PC-3 (cell line): ENCODE measurements at regions of chr20 and their contacts with region 1.

Region 1: DNA sequence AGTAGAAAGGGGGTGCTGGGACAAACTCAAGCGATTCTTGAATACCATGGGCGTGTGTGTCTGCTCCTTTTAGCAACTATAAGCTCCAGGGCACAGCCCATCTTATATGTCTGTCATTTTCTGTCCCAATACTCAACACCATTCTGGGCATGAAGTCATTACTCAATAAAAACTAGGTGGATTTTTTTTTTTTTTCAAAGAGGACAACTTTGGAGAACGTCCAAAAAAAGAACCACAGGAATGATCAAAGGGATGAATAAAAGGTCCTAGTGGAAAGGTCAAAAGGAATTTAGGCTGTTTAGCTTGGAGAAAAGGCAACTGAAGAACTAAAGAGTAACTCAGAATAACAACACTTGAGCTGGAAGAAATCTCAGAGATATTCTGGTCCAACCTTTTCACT is 24.4 kb downstream of the UQCC1 start:
- DNase-seq: peak; percentile 72
- ATAC-seq: peak; percentile 61
- H3K4me3 ChIP-seq: no peak overlapping the region
- H3K27ac ChIP-seq: no peak overlapping the region
- H3K4me1 ChIP-seq: peaks cover 14% of the 10 kb centered on the region
- H3K27me3 ChIP-seq: no peaks in the 10 kb centered on the region
- CTCF ChIP-seq: no peak

Region 2: DNA sequence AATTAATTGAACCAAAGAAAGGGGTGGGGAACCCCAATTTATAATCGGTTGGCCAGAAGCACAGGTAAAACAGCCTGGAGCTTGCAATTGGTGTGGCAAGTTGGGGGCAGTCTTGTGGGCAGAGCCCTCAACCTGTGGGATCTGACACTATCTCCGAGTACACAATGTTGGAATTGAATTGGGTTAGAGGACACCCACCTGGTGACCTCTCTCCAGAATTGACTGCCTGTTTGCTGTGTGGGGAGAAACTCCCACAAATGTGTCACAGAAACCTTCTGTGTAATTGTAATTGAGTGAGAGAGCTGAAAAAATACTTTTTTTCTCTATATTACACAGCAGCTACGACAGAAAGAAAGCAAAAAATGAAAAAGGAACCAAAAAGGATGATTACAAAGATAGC is 42.1 kb before region 1 on chr20:
- CTCF ChIA-PET with region 1: no interaction called
- POLR2A ChIA-PET with region 1: no interaction called
- intact Hi-C with region 1: loop called (anchors 5 kb)
- DNase-seq: no peak
- ATAC-seq: no peak
- H3K4me3 ChIP-seq: no peak overlapping the region
- H3K27ac ChIP-seq: no peak overlapping the region
- H3K4me1 ChIP-seq: peaks cover 11% of the 10 kb centered on the region
- H3K27me3 ChIP-seq: no peaks in the 10 kb centered on the region
- CTCF ChIP-seq: no peak

Region 3: DNA sequence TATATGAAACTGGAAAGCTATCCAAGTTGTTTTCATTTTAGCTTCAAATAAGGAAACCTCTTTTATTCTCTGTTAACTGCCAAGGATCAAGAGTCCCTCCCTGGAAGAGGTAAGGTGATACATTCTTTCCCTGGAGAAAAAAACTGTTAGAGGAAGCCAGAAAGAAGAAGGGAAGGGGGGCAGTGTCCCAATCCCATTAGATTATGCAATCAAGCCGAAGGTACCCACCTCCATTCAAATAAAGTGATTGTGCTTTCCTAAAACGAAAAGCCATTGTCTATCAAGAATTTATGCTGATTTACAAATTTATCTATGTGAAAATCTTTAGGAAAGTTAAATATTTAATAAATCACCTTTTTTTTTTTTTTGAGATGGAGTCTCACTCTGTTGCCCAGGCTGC is 34.0 kb after region 1 on chr20:
- CTCF ChIA-PET with region 1: no interaction called
- POLR2A ChIA-PET with region 1: no interaction called
- intact Hi-C with region 1: no loop called
- DNase-seq: no peak
- ATAC-seq: no peak
- H3K4me3 ChIP-seq: no peak overlapping the region
- H3K27ac ChIP-seq: no peak overlapping the region
- H3K4me1 ChIP-seq: no peaks in the 10 kb centered on the region
- H3K27me3 ChIP-seq: no peaks in the 10 kb centered on the region
- CTCF ChIP-seq: no peak